Right ventricle myocardium superior (tissue), 1 donor: ENCODE measurements at regions of chr14 and their contacts with region 1.

Region 1: DNA sequence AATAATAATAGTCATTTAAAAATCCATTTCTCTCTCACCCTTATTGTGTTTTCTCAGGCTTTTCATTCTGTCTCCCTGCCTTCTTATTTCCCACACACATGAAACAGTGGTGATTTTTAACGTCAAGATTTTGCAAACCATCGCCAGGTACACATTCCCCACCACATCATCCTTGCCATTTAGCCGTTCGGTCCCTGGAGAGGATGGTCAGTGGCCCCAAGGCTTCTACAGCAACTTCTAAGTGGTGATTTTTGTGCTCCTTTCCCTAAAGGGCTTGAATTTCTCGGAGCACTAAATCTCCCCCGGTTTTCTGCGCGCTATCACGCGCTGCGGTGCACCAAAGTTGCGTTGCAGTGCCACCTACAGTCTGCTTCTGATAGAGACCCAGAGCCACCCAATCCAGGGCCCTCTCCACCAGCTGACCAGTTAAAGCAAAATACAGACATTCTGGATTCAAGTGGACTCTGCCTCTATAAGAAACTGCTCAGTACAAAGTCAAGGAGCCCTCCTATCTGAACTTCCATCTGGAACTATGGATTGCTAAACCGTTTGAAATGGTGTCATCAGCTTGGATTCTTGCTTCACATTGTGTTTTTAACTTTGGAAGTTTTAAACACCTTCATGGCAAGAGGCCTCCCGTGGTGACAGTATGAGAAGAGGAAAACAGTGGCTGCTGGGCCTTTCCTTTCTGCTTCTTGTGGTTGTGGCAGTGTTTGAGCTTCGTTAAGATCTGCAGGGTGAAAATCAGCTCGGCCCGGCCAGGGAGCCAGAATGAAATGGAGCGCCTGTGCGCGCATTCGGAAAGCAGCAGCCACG is 234.0 kb downstream of the SPTSSA start:
- DNase-seq: peak; percentile 74
- ATAC-seq: peak; percentile 97

Region 2: GRCh38 chr14:33839193-33840076 is 388.6 kb before region 1 on chr14:
- intact Hi-C with region 1: loop called (anchors 5 kb)
- DNase-seq: peak; percentile 46
- ATAC-seq: peak; percentile 91

Region 3: DNA sequence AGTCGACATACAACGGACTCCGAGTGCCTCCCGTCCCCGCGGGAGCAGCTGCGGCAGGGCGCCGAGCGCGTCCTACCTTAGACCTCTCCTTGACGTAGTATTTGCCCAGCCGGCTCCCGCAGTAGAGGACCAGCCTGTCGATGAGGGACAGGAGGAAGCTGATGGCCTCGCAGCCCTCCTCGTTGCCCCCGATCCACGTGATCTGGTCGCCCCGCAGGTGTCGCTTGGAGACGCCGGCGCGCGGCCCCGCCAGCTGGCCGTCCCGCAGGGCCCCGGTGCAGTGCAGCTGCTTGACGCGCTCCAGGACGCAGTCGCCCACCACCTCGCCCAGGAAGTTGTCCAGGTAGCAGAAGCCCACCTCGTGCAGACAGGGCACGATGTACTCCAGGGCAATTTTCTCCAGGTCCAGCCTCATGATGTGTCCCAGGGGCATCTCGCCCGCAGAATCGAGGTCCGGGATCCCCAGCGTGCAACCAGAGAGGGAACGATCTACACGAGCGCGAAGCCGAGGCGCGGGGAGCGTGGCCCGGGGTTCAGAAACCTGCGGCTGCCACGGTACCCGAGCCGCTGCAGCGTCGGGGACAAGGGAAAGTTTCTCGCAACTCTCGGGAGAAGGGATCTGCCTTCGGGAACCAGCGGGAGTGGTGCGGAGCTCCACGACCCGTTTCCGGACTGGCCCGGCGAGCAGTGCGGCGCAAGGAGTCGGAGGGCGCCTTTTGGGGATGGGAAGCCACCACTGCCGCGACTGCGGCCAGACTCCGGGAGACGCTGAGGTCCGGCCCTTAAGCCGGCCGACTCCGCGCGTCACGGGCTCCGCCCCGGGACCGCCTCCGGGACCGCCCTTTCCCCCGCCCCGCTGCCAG is 277.5 kb before region 1 on chr14 and contains the start of gene EGLN3:
- intact Hi-C with region 1: loop called (anchors 10 kb)
- DNase-seq: peak; percentile 94
- ATAC-seq: peak; percentile 98
- total RNA-seq, gene EGLN3: 111 TPM

Region 4: DNA sequence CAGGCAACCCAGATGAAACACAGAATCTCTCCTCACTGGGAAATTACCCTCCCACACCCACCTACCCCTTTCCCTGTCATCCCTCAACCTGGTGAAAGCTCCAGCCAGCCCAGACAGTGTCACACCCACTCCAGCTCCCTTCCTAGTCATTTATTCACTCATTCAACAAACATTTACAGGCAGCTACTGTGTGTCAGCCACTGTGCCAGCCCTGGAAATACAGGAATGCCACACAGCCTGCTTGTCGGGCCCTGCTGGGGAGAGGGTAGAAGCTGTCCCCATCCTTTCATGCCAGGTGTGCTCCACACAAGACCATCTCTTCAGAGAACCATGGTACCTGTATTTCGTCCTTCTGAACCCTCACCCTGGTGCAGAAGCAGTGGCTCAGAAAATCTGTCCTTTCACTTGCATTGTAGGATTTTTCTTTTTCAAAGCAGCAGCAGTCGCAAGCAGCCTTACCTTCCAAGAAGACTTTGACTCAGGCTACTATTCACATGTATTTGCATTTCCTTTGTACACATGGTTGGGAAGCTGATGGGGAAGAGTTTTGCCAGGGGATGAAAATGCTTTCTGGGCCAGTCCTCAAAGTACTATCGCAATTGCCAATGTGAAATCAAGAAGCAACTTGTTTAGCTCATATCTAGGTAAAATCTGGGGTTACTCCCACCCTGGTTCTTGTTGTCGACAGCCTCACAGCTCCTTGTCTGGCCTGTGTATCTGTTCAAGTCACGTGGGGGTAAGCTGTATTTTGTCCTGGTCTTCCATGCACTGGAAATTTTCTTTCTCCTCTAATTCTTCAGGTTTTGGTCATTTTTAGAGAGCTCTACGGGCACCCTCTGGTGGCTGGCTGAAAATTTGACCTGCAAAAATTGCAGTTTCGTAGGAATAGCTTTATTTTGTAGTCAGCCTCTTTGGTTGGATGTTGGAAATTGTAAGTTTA is 129.7 kb before region 1 on chr14:
- intact Hi-C with region 1: loop called (anchors 10 kb)
- DNase-seq: no peak
- ATAC-seq: peak; percentile 77

Region 5: GRCh38 chr14:34300882-34301734 is 73.1 kb after region 1 on chr14:
- intact Hi-C with region 1: loop called (anchors 5 kb)
- DNase-seq: no peak
- ATAC-seq: peak; percentile 39